OCI-LY7 (cell line): ENCODE measurements at regions of chr6 and their contacts with region 1.

Region 1: DNA sequence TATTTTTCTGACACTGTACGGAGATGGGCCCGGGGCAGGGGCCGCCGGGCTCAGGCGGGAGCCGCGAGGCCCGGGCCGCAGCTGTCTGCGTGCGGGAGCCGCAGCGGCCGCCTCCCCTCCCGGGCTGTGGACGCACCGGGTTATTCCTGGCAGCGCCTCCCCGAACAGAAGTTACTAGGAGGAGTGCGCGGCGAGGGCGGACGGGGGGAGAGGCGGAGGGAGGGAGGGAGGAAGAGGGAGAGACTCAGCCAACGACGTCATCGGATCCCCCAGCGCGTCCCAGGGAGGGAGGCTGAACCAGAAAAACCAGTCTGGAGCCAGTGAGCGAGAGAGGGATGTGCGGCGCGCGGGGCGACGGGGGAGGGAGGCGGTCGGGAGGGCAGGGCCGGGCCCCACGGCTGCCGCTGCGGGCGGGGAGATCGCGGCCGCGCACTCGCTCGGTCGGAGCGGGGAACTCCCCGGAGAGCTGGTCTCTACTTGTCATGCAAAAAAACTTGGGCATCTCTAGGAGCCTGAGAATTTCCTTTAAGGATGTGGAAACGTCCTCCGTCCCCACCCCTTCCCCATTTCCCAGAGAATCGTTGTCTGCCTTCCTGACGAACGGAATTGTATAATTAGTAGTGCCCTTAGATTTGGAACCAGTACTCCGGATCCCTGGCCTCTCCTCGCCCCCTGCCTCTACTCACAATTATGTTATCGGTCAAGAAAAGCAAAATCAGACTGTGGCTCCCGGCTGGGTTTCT is 1.4 kb upstream of the HIVEP2 start:
- DNase-seq: peak; percentile 77
- H3K4me3 ChIP-seq: peak overlapping the region; percentile 94
- H3K27ac ChIP-seq: peak overlapping the region; percentile 95
- H3K4me1 ChIP-seq: peaks cover 30% of the 10 kb centered on the region
- CTCF ChIP-seq: no peak

Region 2: DNA sequence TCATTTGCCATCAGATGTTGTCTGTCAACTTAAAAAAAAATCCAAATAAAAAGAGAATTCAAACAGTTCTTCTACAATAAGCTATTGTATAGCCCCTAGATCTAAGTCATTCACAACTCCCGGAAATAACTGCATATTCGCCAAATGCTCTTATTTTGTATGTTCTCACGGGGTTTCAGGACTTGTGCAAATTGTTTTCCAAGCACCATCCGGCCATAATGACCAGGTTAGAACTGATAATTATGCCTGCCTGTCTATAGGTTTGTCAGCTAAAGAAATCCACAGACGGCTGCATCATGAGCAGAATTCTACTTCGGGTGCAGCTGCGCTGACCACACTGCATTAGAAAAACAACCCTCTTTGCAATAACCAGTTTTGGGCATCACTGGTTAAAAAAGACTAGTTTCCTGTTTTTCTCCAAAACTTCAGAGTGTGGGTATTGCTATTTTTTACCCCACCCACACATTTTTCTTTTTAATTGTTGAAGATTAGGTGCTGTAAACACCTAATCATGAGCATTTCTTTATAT is 89.1 kb before region 1 on chr6:
- CTCF ChIA-PET with region 1: no interaction called
- POLR2A ChIA-PET with region 1: interaction called, 5 read pairs
- intact Hi-C with region 1: loop called (anchors 2 kb)
- DNase-seq: peak; percentile 86
- H3K4me3 ChIP-seq: peak overlapping the region; percentile 61
- H3K27ac ChIP-seq: peak overlapping the region; percentile 94
- H3K4me1 ChIP-seq: peaks cover 91% of the 10 kb centered on the region
- CTCF ChIP-seq: no peak

Region 3: DNA sequence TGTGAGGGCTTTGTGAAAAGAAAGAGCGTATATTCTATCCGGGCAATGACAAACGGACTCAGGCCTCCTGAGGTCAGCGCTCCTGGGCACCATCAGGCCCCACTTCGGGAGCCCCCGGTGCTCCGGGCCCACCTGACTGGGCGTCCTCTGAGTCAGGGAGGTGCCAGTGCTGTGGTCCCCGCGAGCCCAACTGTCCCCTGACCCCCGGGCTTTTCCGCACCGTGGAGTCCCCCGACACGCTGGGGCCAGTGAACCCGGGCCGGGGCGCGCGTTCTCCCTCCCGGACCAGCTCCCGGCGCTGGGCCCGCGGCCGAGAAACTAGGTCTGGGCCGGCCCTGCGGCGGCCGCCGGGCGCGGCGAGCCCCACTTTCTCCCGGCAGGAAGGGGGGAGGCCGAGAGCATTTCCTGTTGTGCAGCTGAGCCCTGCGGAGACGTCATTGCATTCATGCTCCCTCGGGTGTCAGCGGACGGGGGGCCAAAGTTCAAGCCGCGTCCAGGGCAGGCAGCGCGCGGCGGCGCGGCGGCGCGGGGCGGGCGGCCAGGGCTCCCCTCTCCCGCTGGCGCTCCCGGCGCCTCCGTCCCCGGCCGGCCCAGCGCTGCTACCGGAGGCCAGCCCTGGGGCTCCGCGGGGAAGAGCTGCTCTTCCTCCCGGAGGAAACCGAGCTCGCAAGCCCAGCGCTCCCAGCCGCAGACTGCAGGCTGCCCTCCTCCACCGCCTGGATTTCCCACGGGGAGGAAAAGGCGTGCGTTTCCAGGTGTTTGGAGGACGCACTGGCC is 19.7 kb before region 1 on chr6:
- CTCF ChIA-PET with region 1: no interaction called
- POLR2A ChIA-PET with region 1: interaction called, 10 read pairs
- intact Hi-C with region 1: loop called (anchors 1 kb)
- DNase-seq: peak; percentile 84
- H3K4me3 ChIP-seq: peak overlapping the region; percentile 84
- H3K27ac ChIP-seq: peak overlapping the region; percentile 58
- H3K4me1 ChIP-seq: peaks cover 53% of the 10 kb centered on the region
- CTCF ChIP-seq: no peak

Region 4: GRCh38 chr6:143450453-143451371 is 504.4 kb after region 1 on chr6 and contains the starts of genes ADAT2 and PEX3:
- CTCF ChIA-PET with region 1: no interaction called
- POLR2A ChIA-PET with region 1: no interaction called
- intact Hi-C with region 1: loop called (anchors 5 kb)
- DNase-seq: peak; percentile 95
- H3K4me3 ChIP-seq: peak within 1 kb of the TSS; percentile 94
- H3K27ac ChIP-seq: peak within 1 kb of the TSS; percentile 72
- H3K4me1 ChIP-seq: peaks cover 36% of the 10 kb centered on the region
- CTCF ChIP-seq: no peak
- total RNA-seq, gene ADAT2: 17.6 and 21.7 TPM in 2 replicates
- total RNA-seq, gene PEX3: 10.9 and 14.8 TPM in 2 replicates